ENCODE measurements at regions of chr3 and their contacts with region 1.

Region 1: GRCh38 chr3:143644370-143645089 is 203.7 kb downstream of the SLC9A9 start:
- DNase-seq: no peak
- ATAC-seq: peak; percentile 55 to 76
- H3K4me3 ChIP-seq: no peak overlapping the region
- H3K27ac ChIP-seq: no peak overlapping the region
- H3K4me1 ChIP-seq: peaks cover 0 to 4% of the 10 kb centered on the region in 2 donors
- H3K27me3 ChIP-seq: no peaks in the 10 kb centered on the region
- CTCF ChIP-seq: peak in 3 of 5 experiments; percentile 40 to 53 (median 51)
- POLR2A ChIP-seq: no peak

Region 2: GRCh38 chr3:143121241-143122088 is 523.1 kb before region 1 on chr3:
- in situ Hi-C with region 1: no loop called
- intact Hi-C with region 1: loop called (anchors 10 kb)
- DNase-seq: no peak
- ATAC-seq: no peak
- H3K4me3 ChIP-seq: peak overlapping the region; percentile 36 to 84 (median 70)
- H3K27ac ChIP-seq: no peak overlapping the region
- H3K4me1 ChIP-seq: no peaks in the 10 kb centered on the region
- H3K27me3 ChIP-seq: peaks cover 21 to 28% (median 22%) of the 10 kb centered on the region in 3 donors
- CTCF ChIP-seq: peak in 3 of 5 experiments; percentile 17 to 31 (median 24)
- POLR2A ChIP-seq: no peak

Region 3: GRCh38 chr3:143433787-143434378 is 210.6 kb before region 1 on chr3:
- in situ Hi-C with region 1: no loop called
- intact Hi-C with region 1: loop called (anchors 5 kb)
- DNase-seq: no peak
- ATAC-seq: no peak
- H3K4me3 ChIP-seq: no peak overlapping the region
- H3K27ac ChIP-seq: no peak overlapping the region
- H3K4me1 ChIP-seq: no peaks in the 10 kb centered on the region
- H3K27me3 ChIP-seq: no peaks in the 10 kb centered on the region
- CTCF ChIP-seq: no peak
- POLR2A ChIP-seq: no peak

Region 4: GRCh38 chr3:143595456-143596077 is 49.0 kb before region 1 on chr3:
- in situ Hi-C with region 1: no loop called
- intact Hi-C with region 1: loop called (anchors 5 kb)
- DNase-seq: no peak
- ATAC-seq: no peak
- H3K4me3 ChIP-seq: no peak overlapping the region
- H3K27ac ChIP-seq: no peak overlapping the region
- H3K4me1 ChIP-seq: no peaks in the 10 kb centered on the region
- H3K27me3 ChIP-seq: no peaks in the 10 kb centered on the region
- CTCF ChIP-seq: no peak
- POLR2A ChIP-seq: no peak

Region 5: GRCh38 chr3:143924522-143925285 is 280.2 kb after region 1 on chr3:
- in situ Hi-C with region 1: no loop called
- intact Hi-C with region 1: no loop called
- DNase-seq: no peak
- ATAC-seq: no peak
- H3K4me3 ChIP-seq: no peak overlapping the region
- H3K27ac ChIP-seq: no peak overlapping the region
- H3K4me1 ChIP-seq: no peaks in the 10 kb centered on the region
- H3K27me3 ChIP-seq: no peaks in the 10 kb centered on the region
- CTCF ChIP-seq: no peak
- POLR2A ChIP-seq: no peak

Measured in gastrocnemius medialis (tissue), 4 donors.